ENCODE measurements at regions of chr12 and their contacts with region 1.

Region 1: DNA sequence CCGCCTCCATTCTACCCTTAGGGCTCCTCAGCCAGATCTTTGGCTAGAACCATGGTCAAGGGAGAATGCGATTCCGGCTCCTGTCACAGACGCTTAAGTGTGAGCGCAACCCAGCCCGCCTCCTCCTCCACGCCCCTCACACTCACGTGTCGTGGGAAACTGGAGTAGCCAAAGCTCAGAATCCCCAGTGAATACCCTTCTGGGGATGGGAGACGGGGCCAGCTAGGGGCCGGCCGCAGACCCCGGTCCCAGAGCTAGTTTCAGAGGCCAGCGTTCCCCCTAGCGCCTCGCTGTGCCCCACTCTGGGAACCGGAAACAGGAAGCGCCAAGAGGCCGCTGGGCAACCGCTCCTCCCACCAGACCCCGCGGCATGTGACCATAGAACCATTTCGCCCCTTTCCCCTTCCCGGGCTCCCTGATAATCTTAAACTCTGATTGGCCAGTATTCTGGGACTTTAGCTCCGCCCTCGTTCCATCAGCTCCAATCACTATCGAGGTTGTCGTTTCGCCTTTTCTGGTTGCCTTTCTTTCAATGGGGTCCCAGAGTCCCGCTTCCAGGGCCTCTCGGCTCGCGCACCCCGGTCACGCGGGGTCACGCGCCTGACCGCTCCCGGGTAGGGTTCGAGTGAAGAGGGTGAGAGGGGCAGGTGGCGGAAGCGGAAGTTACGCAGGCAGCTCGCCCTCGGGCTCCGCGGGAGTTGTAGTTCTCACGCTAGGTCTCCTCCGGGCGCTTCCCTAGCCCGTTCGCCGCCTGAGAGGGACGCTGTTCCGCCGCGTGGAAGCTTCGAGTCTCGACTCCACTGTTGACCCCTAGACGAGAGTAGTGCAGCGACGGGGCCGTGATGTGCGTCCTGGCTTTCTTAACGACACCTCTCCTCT is at the start of gene M6PR:
- DNase-seq: peak; percentile 95
- ATAC-seq: peak; percentile 83
- H3K4me3 ChIP-seq: peak within 1 kb of the TSS; percentile 67 to 99 (median 91)
- H3K4me3 Mint-ChIP-seq: peak within 1 kb of the TSS; percentile 95
- H3K27ac ChIP-seq: peak within 1 kb of the TSS; percentile 97 to 98
- H3K27ac Mint-ChIP-seq: peak within 1 kb of the TSS; percentile 98
- H3K4me1 ChIP-seq: peaks cover 31 to 35% of the 10 kb centered on the region in 2 donors
- H3K4me1 Mint-ChIP-seq: peaks cover 44% of the 10 kb centered on the region
- H3K27me3 ChIP-seq: no peaks in the 10 kb centered on the region
- H3K27me3 Mint-ChIP-seq: no peaks in the 10 kb centered on the region
- CTCF ChIP-seq: peak; percentile 47
- total RNA-seq, gene M6PR: 199 and 204 TPM in 2 replicates

Region 2: GRCh38 chr12:8914716-8915526 is 34.7 kb before region 1 on chr12:
- CTCF ChIA-PET with region 1: interaction called, 14 read pairs
- POLR2A ChIA-PET with region 1: interaction called, 7 read pairs
- intact Hi-C with region 1: loop called (anchors 1 kb)
- DNase-seq: peak; percentile 79
- ATAC-seq: peak; percentile 80
- H3K4me3 ChIP-seq: peak overlapping the region; percentile 64 to 87 (median 75)
- H3K4me3 Mint-ChIP-seq: no peak overlapping the region
- H3K27ac ChIP-seq: peak overlapping the region; percentile 31 to 47
- H3K27ac Mint-ChIP-seq: no peak overlapping the region
- H3K4me1 ChIP-seq: peaks cover 20 to 22% of the 10 kb centered on the region in 2 donors
- H3K4me1 Mint-ChIP-seq: peaks cover 26% of the 10 kb centered on the region
- H3K27me3 ChIP-seq: no peaks in the 10 kb centered on the region
- H3K27me3 Mint-ChIP-seq: no peaks in the 10 kb centered on the region
- CTCF ChIP-seq: no peak

Measured in B cell (primary cell).